IMR-90 (cell line): ENCODE measurements at regions of chr17 and their contacts with region 1.

Region 1: DNA sequence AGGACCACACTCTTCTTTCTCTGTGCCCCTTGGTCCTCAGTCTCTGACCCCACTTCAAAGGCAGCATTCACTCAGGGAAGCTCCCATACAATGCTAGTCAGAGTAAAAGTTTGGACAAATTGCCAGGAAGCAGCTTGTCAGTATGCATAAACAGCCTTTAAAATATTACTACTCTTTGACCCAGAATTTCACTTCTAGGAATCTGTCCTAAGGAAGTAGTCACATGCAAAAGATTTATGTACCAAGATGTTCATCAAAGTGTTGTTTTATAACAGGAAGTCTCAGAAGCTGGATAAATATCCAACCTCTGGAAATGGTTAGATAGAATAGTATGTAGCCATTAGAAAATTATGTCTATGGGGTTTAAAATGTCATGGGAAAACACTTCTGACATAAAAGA is 31.0 kb downstream of the MAPT start:
- DNase-seq: no peak
- ATAC-seq: no peak
- H3K4me3 ChIP-seq: no peak overlapping the region
- H3K27ac ChIP-seq: no peak overlapping the region
- H3K4me1 ChIP-seq: no peaks in the 10 kb centered on the region
- H3K27me3 ChIP-seq: peaks cover 27% of the 10 kb centered on the region
- CTCF ChIP-seq: no peak
- POLR2A ChIP-seq: no peak
- RAD21 ChIP-seq: no peak

Region 2: GRCh38 chr17:45889579-45889978 is 35.7 kb before region 1 on chr17:
- CTCF ChIA-PET with region 1: no interaction called
- POLR2A ChIA-PET with region 1: no interaction called
- dilution Hi-C with region 1: no loop called
- in situ Hi-C with region 1: loop called (anchors 5 kb)
- intact Hi-C with region 1: no loop called
- DNase-seq: no peak
- ATAC-seq: no peak
- H3K4me3 ChIP-seq: no peak overlapping the region
- H3K27ac ChIP-seq: no peak overlapping the region
- H3K4me1 ChIP-seq: no peaks in the 10 kb centered on the region
- H3K27me3 ChIP-seq: peaks cover 4% of the 10 kb centered on the region; the same call in 1 of the 2 replicates
- CTCF ChIP-seq: no peak
- POLR2A ChIP-seq: no peak
- RAD21 ChIP-seq: no peak

Region 3: DNA sequence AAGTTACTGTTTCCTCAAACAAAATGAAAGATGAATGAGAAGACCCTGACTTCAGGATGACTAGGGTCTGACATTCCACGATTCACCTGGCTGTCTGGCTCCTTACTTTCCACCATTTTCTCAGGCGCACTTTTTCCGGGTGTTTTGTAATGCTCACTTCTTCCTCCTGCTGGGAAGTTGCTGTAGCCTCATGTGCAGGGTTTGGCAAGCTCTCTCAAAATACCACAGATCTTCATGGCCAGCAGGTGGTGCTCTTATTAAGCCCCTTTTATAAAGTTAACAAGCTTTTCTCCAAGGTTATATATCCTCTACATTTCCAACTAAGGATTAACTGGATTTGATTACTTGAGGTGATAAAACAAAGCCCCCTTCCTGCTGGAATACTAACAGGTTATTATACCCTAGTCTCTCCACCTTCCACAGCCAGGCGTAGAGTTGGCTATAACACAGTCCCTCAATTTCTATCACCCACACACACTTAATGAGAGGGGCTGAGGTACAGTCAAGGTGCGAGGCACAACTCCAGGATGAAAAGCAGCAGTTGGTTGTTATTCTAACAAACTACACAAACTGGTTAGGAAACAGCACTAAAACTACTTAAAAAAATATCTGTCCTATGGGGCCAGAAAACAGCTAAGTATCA is 119.1 kb after region 1 on chr17:
- CTCF ChIA-PET with region 1: no interaction called
- POLR2A ChIA-PET with region 1: no interaction called
- dilution Hi-C with region 1: no loop called
- in situ Hi-C with region 1: no loop called
- intact Hi-C with region 1: no loop called
- DNase-seq: peak; percentile 87
- ATAC-seq: peak; percentile 81
- H3K4me3 ChIP-seq: no peak overlapping the region
- H3K27ac ChIP-seq: no peak overlapping the region
- H3K4me1 ChIP-seq: no peaks in the 10 kb centered on the region
- H3K27me3 ChIP-seq: no peaks in the 10 kb centered on the region
- CTCF ChIP-seq: peak; percentile 90
- POLR2A ChIP-seq: no peak
- RAD21 ChIP-seq: peak; percentile 75